SK-N-SH (cell line): ENCODE measurements at regions of chr17 and their contacts with region 1.

Region 1: GRCh38 chr17:7614422-7615264 is at the start of gene FXR2:
- DNase-seq: peak; percentile 99
- H3K4me3 ChIP-seq: peak within 1 kb of the TSS; percentile 77 to 90
- H3K27ac ChIP-seq: peak within 1 kb of the TSS; percentile 75 to 84
- H3K4me1 ChIP-seq: peaks cover 0 to 18% of the 10 kb centered on the region in 2 experiments; a peak in 3 of 4 replicates
- H3K27me3 ChIP-seq: no peaks in the 10 kb centered on the region
- CTCF ChIP-seq: peak; percentile 52
- EP300 ChIP-seq: peak in 1 of 2 experiments; percentile 35; a peak in 1 of 4 replicates
- RAD21 ChIP-seq: peak; percentile 36
- polyA plus RNA-seq, gene FXR2: 56.4 and 62.3 TPM in 2 replicates

Region 2: DNA sequence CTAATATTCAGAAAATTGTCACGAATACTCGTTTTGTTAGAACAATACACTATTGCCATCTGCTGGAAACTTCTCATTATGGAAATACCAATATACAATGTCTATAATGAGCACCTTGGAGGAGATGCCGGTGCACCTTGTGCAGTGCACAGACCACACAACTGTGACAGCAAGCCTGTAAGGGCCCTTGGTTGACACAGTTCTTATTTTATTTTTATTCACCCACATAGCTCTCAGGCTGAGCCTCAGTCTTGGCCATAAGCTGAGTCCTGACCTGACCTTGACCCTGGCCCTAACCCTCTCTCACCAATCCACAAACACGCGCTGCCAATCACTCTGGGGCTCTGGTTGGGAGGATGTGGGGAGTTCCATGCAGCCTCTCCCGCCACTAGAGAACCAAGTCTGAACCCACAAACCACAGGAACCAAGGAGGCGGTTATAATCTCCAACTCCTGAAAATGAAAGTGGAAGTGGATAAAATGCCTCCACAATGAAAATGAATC is 1187.3 kb before region 1 on chr17:
- CTCF ChIA-PET with region 1: no interaction called
- POLR2A ChIA-PET with region 1: no interaction called
- DNase-seq: no peak
- H3K4me3 ChIP-seq: no peak overlapping the region
- H3K27ac ChIP-seq: no peak overlapping the region
- H3K4me1 ChIP-seq: no peaks in the 10 kb centered on the region
- H3K27me3 ChIP-seq: peaks cover 13% of the 10 kb centered on the region; the same call in 1 of the 2 replicates
- CTCF ChIP-seq: peak; percentile 36
- EP300 ChIP-seq: no peak
- RAD21 ChIP-seq: 0 out of 2 replicates have a peak, but pooled peaks have one; percentile 4

Region 3: DNA sequence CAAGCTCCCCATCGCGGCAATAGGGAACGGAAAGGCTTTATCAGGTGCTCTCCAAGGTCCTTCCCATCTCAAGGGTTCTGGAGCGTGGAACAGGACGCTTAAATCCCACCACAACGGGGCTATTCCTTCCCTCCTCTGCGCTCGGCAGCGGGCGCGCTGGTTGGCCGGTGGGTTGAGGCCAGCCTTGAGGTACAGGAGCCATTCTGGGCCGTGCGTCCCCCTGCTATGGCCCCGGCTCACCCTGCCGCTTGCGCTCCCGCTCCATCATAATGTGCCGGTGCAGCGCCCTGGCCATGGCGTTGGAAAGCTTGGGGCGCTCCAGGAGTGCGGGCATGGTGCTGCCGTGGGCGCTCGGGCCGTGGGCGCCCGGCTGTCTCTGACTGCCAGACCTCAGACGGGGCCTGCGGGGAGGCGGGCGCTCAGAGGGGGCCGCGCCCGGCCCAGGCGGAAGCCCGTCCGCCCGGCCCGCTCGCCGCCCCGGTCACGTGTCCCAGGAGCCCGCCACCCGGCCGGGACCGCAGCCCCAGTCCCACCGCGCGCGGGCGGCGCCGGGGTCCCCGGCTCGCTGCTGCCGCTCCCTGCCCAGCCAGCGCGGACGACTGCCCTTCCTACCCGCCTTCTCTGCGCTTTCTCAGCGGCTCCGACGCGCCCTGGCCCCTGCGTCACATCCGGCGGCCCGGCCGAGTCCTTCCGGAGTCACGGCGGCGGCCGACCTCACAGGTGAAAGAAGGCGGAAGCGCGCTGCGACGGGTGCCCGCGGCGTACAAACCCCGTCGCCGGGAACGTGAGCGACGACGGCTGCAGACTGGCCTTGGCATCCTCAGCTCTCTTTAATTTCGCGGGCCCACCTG is 299.7 kb before region 1 on chr17 and contains the start of gene GPS2:
- CTCF ChIA-PET with region 1: no interaction called
- POLR2A ChIA-PET with region 1: no interaction called
- DNase-seq: peak; percentile 97
- H3K4me3 ChIP-seq: peak within 1 kb of the TSS; percentile 88 to 94
- H3K27ac ChIP-seq: peak within 1 kb of the TSS; percentile 76 to 90
- H3K4me1 ChIP-seq: peaks cover 14 to 39% of the 10 kb centered on the region in 2 experiments
- H3K27me3 ChIP-seq: no peaks in the 10 kb centered on the region
- CTCF ChIP-seq: no peak
- EP300 ChIP-seq: no peak
- RAD21 ChIP-seq: no peak
- polyA plus RNA-seq, gene GPS2: 67.0 and 102 TPM in 2 replicates

Region 4: GRCh38 chr17:7583253-7584109 is 31.2 kb before region 1 on chr17 and contains the start of gene MPDU1:
- CTCF ChIA-PET with region 1: interaction called, 15 read pairs
- POLR2A ChIA-PET with region 1: interaction called, 4 read pairs
- DNase-seq: peak; percentile 93
- H3K4me3 ChIP-seq: peak within 1 kb of the TSS; percentile 65 to 73
- H3K27ac ChIP-seq: peak within 1 kb of the TSS; percentile 97 to 98
- H3K4me1 ChIP-seq: peaks cover 22 to 32% of the 10 kb centered on the region in 2 experiments; a peak in 3 of 4 replicates
- H3K27me3 ChIP-seq: no peaks in the 10 kb centered on the region
- CTCF ChIP-seq: no peak
- EP300 ChIP-seq: no peak
- RAD21 ChIP-seq: no peak
- polyA plus RNA-seq, gene MPDU1: 126 and 142 TPM in 2 replicates

Region 5: DNA sequence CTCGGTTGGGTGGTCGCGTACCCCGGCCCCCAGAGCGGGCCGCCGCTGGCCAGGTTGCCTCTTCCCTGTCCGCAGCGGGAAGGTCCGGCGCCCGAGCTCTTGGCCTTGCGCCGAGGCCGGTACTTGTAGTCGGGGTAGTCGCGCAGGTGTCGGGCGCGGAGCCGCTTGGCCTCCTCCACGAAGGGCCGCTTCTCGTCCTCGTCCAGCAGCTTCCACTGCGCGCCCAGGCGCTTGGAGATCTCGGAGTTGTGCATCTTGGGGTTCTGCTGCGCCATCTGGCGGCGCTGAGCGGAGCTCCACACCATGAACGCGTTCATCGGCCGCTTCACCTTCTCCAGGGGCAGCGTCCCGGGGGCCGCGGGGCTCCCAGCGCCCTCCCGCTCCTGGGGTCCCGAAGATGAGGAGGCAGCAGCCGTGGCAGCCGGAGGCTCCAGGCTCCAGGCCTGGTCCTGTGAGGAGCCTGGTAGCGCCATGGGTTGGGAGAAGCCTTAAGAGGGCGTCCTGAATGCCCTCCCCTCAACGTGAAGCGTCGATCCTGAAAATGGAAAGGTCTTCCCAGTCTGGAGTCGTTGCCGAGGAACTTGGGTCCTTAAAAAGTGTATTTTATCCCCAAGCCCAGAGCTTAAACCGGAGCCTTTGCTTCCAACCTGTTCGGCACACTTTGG is 25.3 kb before region 1 on chr17:
- CTCF ChIA-PET with region 1: interaction called, 15 read pairs
- POLR2A ChIA-PET with region 1: interaction called, 7 read pairs
- DNase-seq: peak; percentile 91
- H3K4me3 ChIP-seq: peak overlapping the region in 1 of 2 experiments; percentile 3; a peak in 1 of 4 replicates
- H3K27ac ChIP-seq: peak overlapping the region in 1 of 2 experiments; percentile 21; a peak in 2 of 4 replicates
- H3K4me1 ChIP-seq: peaks cover 17 to 32% of the 10 kb centered on the region in 2 experiments
- H3K27me3 ChIP-seq: no peaks in the 10 kb centered on the region
- CTCF ChIP-seq: peak; percentile 83
- EP300 ChIP-seq: no peak
- RAD21 ChIP-seq: peak; percentile 61

Region 6: DNA sequence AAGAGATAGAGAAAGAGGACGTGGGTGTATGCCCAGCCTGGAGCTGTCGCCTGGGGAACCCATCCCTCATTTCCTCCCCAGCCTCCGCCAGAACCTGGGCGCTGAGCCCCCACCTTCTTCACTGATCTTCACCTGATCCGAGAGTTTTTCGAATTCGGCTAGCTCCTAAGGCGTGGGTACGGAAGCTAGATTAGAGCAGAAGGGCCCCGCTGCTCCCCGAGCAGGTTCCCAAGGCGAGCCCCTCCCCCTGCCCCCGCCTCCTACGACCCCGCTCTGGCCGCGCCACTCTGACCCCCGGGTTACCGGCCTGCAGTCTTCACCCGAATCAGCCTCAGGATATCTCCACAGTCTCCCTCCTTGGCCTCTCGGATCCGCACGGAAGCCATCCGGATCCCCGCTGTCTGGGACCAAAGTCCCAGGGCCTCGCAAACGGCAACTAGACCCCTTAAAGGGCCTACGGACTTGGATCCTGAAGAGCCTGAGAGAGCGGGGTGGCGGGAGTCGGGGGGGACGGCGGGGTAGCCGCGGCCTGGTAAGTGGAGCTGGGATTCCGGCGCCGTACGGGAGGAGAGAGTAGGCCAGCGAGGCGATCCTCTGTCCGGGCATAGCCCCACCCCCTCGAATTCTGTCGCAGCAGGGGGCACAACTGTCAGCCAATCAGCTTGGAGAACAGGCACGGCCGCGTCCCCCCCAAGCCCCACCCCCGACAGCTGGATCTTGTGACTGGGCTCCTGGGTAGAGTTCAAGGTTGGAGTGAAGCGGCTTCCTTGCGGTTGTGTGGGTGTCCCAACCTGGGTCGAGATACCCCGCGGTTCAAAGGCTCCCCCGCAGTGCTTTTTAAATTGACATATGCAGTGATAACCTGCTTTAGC is 12.8 kb after region 1 on chr17 and contains the start of gene SAT2:
- CTCF ChIA-PET with region 1: interaction called, 7 read pairs
- POLR2A ChIA-PET with region 1: interaction called, 12 read pairs
- DNase-seq: peak; percentile 97
- H3K4me3 ChIP-seq: peak within 1 kb of the TSS; percentile 62 to 77
- H3K27ac ChIP-seq: peak within 1 kb of the TSS; percentile 85 to 88
- H3K4me1 ChIP-seq: peaks cover 0 to 20% of the 10 kb centered on the region in 2 experiments; a peak in 1 of 4 replicates
- H3K27me3 ChIP-seq: no peaks in the 10 kb centered on the region
- CTCF ChIP-seq: no peak
- EP300 ChIP-seq: no peak
- RAD21 ChIP-seq: no peak
- polyA plus RNA-seq, gene SAT2: 42.8 and 43.1 TPM in 2 replicates